K562 (cell line): ENCODE measurements at regions of chr1 and their contacts with region 1.

Region 1: DNA sequence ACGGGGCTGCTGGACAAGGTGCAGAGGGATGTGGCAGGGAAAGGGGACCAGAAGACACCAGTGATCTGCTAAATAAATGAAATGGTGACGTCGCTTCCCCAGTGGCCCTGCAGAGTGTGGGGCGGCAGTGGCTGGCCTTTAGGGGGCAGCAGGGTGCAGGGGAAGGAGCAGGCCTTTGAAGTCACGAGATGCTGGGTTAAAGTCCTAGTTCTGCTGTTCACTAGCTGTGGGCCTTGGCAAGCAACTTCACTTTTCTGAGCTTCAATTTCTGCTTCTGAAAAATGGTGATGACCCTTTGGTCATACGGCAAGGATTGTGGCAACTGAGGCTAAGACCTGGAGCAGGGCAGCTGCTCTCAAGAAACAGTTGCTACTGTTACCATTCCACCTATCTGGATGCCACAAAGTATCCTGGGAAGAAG is 9.2 kb upstream of the GALE start:
- DNase-seq: peak; percentile 80 to 91 (median 85)
- ATAC-seq: peak; percentile 96
- H3K4me3 ChIP-seq: no peak overlapping the region
- H3K27ac ChIP-seq: no peak overlapping the region
- H3K4me1 ChIP-seq: peaks cover 5 to 18% of the 10 kb centered on the region in 2 experiments; a peak in 4 of 5 replicates
- H3K27me3 ChIP-seq: no peaks in the 10 kb centered on the region
- CTCF ChIP-seq: peak; percentile 96 to 98 (median 98)
- EP300 ChIP-seq: 0 out of 2 replicates have a peak, but pooled peaks have one; percentile 8
- POLR2A ChIP-seq: no peak
- RAD21 ChIP-seq: peak; percentile 80 to 94

Region 2: GRCh38 chr1:23691499-23692307 is 118.1 kb before region 1 on chr1 and contains the start of gene RPL11:
- CTCF ChIA-PET with region 1: no interaction called
- POLR2A ChIA-PET with region 1: no interaction called
- in situ Hi-C with region 1: no loop called
- intact Hi-C with region 1: no loop called
- DNase-seq: peak; percentile 92 to 98 (median 94)
- ATAC-seq: peak; percentile 97
- H3K4me3 ChIP-seq: peak within 1 kb of the TSS; percentile 85
- H3K27ac ChIP-seq: peak within 1 kb of the TSS; percentile 88
- H3K4me1 ChIP-seq: peaks cover 14 to 36% of the 10 kb centered on the region in 2 experiments; a peak in 4 of 5 replicates
- H3K27me3 ChIP-seq: no peaks in the 10 kb centered on the region
- CTCF ChIP-seq: peak; percentile 85 to 93 (median 92)
- EP300 ChIP-seq: peak; percentile 57
- POLR2A ChIP-seq: peak; percentile 99
- RAD21 ChIP-seq: no peak; a peak in 1 of 4 replicates
- polyA plus RNA-seq, gene RPL11: 2,542 to 2,758 TPM

Region 3: DNA sequence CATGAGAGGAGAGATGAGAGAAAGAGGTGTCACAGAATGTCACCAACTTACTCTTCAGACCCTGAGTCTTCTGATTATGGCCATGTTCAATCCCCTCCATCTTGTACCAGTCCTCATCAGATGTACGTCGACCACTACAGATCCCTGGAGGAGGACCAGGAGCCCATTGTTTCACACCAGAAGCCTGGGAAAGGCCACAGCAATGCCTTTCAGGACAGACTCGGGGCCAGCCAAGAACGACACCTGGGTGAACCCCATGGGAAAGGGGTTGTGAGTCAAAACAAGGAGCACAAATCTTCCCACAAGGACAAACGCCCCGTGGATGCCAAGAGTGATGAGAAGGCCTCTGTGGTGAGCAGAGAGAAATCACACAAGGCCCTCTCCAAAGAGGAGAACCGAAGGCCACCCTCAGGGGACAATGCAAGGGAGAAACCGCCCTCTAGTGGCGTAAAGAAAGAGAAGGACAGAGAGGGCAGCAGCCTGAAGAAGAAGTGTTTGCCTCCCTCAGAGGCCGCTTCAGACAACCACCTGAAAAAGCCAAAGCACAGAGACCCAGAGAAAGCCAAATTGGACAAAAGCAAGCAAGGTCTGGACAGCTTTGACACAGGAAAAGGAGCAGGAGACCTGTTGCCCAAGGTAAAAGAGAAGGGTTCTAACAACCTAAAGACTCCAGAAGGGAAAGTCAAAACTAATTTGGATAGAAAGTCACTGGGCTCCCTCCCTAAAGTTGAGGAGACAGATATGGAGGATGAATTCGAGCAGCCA is 58.5 kb before region 1 on chr1:
- CTCF ChIA-PET with region 1: no interaction called
- POLR2A ChIA-PET with region 1: no interaction called
- in situ Hi-C with region 1: no loop called
- intact Hi-C with region 1: no loop called
- DNase-seq: peak; percentile 63 to 77 (median 70)
- ATAC-seq: peak; percentile 95
- H3K4me3 ChIP-seq: no peak overlapping the region
- H3K27ac ChIP-seq: no peak overlapping the region
- H3K4me1 ChIP-seq: peaks cover 0 to 11% of the 10 kb centered on the region in 2 experiments; a peak in 2 of 5 replicates
- H3K27me3 ChIP-seq: no peaks in the 10 kb centered on the region
- CTCF ChIP-seq: peak; percentile 79 to 90 (median 87)
- EP300 ChIP-seq: no peak
- POLR2A ChIP-seq: no peak
- RAD21 ChIP-seq: peak; percentile 47 to 79; a peak in 3 of 4 replicates

Region 4: GRCh38 chr1:23772049-23772853 is 37.5 kb before region 1 on chr1:
- CTCF ChIA-PET with region 1: no interaction called
- POLR2A ChIA-PET with region 1: interaction called, 4 read pairs
- in situ Hi-C with region 1: no loop called
- intact Hi-C with region 1: loop called (anchors 2 kb)
- DNase-seq: peak; percentile 74 to 94 (median 76)
- ATAC-seq: peak; percentile 90
- H3K4me3 ChIP-seq: peak overlapping the region; percentile 8; the same call in 1 of the 2 replicates
- H3K27ac ChIP-seq: peak overlapping the region; percentile 40; the same call in 1 of the 3 replicates
- H3K4me1 ChIP-seq: peaks cover 12 to 40% of the 10 kb centered on the region in 2 experiments; a peak in 3 of 5 replicates
- H3K27me3 ChIP-seq: no peaks in the 10 kb centered on the region
- CTCF ChIP-seq: peak; percentile 96 to 98 (median 97)
- EP300 ChIP-seq: no peak
- POLR2A ChIP-seq: no peak
- RAD21 ChIP-seq: peak; percentile 74 to 94

Region 5: DNA sequence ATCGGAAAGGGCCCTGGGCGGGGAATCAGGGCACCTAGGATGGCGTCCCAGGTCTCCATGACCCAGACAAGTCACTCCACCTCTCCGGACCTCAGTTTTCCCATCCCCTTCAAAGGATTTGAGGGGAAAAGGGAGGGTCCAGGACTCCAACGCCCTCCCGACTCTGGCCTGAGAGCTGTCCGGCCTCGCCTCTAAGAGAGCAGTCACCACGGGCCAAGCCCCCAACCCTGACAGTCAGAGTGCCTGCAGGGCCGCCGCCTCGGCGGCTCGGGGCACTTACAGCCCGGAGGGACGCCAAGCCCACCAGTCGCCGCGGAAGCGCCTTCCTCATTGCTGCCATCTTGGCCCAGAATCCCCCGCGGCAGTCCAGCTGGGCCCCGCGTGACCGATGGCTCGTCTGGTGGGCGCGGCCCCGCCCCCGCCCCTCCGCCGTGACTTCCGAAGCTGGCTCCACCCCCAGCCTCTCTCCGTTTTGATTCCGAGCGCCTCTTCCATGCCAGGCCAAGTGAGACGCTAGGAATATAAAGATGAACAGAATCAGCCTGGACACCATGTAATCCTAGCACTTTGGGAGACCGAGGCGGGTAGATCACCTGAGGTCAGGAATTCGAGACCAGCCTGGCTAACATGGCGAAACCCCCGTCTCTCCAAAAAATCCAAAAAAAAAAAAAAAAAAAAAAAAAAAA is 15.5 kb after region 1 on chr1 and contains the start of gene HMGCL:
- CTCF ChIA-PET with region 1: interaction called, 3 read pairs
- POLR2A ChIA-PET with region 1: interaction called, 12 read pairs
- in situ Hi-C with region 1: no loop called
- intact Hi-C with region 1: no loop called
- DNase-seq: peak; percentile 96 to 97 (median 97)
- ATAC-seq: peak; percentile 98
- H3K4me3 ChIP-seq: peak within 1 kb of the TSS; percentile 90
- H3K27ac ChIP-seq: peak within 1 kb of the TSS; percentile 88
- H3K4me1 ChIP-seq: peaks cover 5 to 20% of the 10 kb centered on the region in 2 experiments; a peak in 4 of 5 replicates
- H3K27me3 ChIP-seq: no peaks in the 10 kb centered on the region
- CTCF ChIP-seq: no peak
- EP300 ChIP-seq: 0 out of 2 replicates have a peak, but pooled peaks have one; percentile 26
- POLR2A ChIP-seq: peak; percentile 98
- RAD21 ChIP-seq: no peak
- polyA plus RNA-seq, gene HMGCL: 73.0 to 82.2 TPM

Region 6: DNA sequence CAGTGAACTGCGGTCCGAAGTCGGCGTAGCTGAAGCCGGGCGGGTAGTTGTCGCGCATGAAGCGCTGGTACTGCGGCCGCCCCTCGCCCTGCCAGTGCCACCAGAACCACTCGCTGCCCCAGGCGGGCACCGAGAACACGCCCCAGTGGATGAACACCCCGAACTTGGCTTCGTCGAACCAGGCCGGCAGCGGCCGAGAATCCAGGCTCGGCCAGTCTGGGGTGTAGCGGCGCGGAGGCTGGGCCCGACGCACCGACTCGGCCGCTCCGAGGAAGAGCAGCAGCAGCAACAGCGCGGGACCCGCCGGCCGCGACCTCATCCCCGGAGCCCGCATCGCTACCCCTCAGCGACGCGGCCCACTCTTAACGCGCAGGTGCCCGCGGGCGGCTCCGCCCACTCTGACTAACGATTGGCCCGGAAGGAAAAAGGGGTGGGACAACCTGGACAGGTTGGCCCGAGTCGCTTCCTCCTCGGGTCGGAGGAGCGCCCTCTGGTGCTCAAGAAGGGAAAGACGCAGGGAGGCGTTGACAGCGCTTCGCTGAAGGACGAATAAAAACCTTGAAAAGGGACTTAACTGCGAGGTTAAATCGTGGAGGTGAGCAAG is 58.3 kb after region 1 on chr1 and contains the start of gene FUCA1:
- CTCF ChIA-PET with region 1: interaction called, 14 read pairs
- POLR2A ChIA-PET with region 1: no interaction called
- in situ Hi-C with region 1: no loop called
- intact Hi-C with region 1: loop called (anchors 1 kb)
- DNase-seq: peak; percentile 98 to 99 (median 99)
- ATAC-seq: peak; percentile 98
- H3K4me3 ChIP-seq: peak within 1 kb of the TSS; percentile 72
- H3K27ac ChIP-seq: peak within 1 kb of the TSS; percentile 74
- H3K4me1 ChIP-seq: peaks cover 14 to 25% of the 10 kb centered on the region in 2 experiments
- H3K27me3 ChIP-seq: no peaks in the 10 kb centered on the region
- CTCF ChIP-seq: peak; percentile 92 to 99 (median 97)
- EP300 ChIP-seq: peak; percentile 25; the same call in 1 of the 2 replicates
- POLR2A ChIP-seq: peak; percentile 66
- RAD21 ChIP-seq: peak; percentile 72 to 78
- polyA plus RNA-seq, gene FUCA1: 7.0 to 8.2 TPM

Region 7: GRCh38 chr1:23916209-23917131 is 106.7 kb after region 1 on chr1:
- CTCF ChIA-PET with region 1: interaction called, 22 read pairs
- POLR2A ChIA-PET with region 1: interaction called, 3 read pairs
- in situ Hi-C with region 1: no loop called
- intact Hi-C with region 1: loop called (anchors 1 kb)
- DNase-seq: peak; percentile 84 to 90 (median 86)
- ATAC-seq: peak; percentile 93
- H3K4me3 ChIP-seq: no peak overlapping the region
- H3K27ac ChIP-seq: peak overlapping the region; percentile 9; the same call in 1 of the 3 replicates
- H3K4me1 ChIP-seq: peaks cover 30 to 48% of the 10 kb centered on the region in 2 experiments
- H3K27me3 ChIP-seq: no peaks in the 10 kb centered on the region
- CTCF ChIP-seq: peak; percentile 90 to 96 (median 95)
- EP300 ChIP-seq: no peak
- POLR2A ChIP-seq: no peak
- RAD21 ChIP-seq: peak; percentile 91 to 96